ENCODE measurements at regions of chr7 and their contacts with region 1.

Region 1: DNA sequence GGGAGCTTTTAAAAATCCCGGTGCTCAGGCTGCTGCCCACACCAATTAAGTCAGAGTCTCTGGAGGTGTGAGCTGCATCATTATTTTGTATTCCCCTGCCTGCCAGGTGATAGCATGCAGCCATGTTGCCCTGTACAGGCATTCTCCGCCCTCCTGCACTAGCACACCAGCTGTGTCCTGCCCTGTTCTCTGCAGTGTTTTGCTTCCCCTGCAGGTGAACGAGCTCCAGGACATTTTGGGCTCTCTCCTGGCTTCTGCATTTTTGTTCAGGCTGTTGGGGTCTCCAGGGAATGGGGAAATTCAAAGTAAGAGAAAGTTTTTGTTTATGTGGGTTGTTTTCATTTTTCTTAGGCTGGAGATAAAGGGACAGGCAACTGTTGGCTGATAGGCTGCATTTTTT is 271.0 kb upstream of the COBL start:
- DNase-seq: no peak
- H3K4me3 ChIP-seq: no peak overlapping the region
- H3K27ac ChIP-seq: no peak overlapping the region
- H3K4me1 ChIP-seq: no peaks in the 10 kb centered on the region
- H3K27me3 ChIP-seq: no peaks in the 10 kb centered on the region
- CTCF ChIP-seq: no peak
- POLR2A ChIP-seq: no peak

Region 2: GRCh38 chr7:51430480-51431086 is 157.0 kb before region 1 on chr7:
- intact Hi-C with region 1: loop called (anchors 5 kb)
- DNase-seq: no peak
- H3K4me3 ChIP-seq: peak overlapping the region in 1 of 3 donors; percentile 22
- H3K27ac ChIP-seq: no peak overlapping the region
- H3K4me1 ChIP-seq: no peaks in the 10 kb centered on the region
- H3K27me3 ChIP-seq: peaks cover 0 to 16% of the 10 kb centered on the region in 2 donors
- CTCF ChIP-seq: peak in 2 of 3 donors; percentile 60 to 66
- POLR2A ChIP-seq: no peak

Region 3: GRCh38 chr7:51517187-51517586 is 70.4 kb before region 1 on chr7:
- intact Hi-C with region 1: no loop called
- DNase-seq: no peak
- H3K4me3 ChIP-seq: no peak overlapping the region
- H3K27ac ChIP-seq: no peak overlapping the region
- H3K4me1 ChIP-seq: no peaks in the 10 kb centered on the region
- H3K27me3 ChIP-seq: no peaks in the 10 kb centered on the region
- CTCF ChIP-seq: no peak
- POLR2A ChIP-seq: no peak

Region 4: GRCh38 chr7:52537051-52537450 is 949.4 kb after region 1 on chr7:
- intact Hi-C with region 1: no loop called
- DNase-seq: no peak
- H3K4me3 ChIP-seq: no peak overlapping the region
- H3K27ac ChIP-seq: no peak overlapping the region
- H3K4me1 ChIP-seq: no peaks in the 10 kb centered on the region
- H3K27me3 ChIP-seq: no peaks in the 10 kb centered on the region
- CTCF ChIP-seq: no peak
- POLR2A ChIP-seq: no peak